Left cardiac atrium (tissue), 4 donors: ENCODE measurements at regions of chr6 and their contacts with region 1.

Region 1: DNA sequence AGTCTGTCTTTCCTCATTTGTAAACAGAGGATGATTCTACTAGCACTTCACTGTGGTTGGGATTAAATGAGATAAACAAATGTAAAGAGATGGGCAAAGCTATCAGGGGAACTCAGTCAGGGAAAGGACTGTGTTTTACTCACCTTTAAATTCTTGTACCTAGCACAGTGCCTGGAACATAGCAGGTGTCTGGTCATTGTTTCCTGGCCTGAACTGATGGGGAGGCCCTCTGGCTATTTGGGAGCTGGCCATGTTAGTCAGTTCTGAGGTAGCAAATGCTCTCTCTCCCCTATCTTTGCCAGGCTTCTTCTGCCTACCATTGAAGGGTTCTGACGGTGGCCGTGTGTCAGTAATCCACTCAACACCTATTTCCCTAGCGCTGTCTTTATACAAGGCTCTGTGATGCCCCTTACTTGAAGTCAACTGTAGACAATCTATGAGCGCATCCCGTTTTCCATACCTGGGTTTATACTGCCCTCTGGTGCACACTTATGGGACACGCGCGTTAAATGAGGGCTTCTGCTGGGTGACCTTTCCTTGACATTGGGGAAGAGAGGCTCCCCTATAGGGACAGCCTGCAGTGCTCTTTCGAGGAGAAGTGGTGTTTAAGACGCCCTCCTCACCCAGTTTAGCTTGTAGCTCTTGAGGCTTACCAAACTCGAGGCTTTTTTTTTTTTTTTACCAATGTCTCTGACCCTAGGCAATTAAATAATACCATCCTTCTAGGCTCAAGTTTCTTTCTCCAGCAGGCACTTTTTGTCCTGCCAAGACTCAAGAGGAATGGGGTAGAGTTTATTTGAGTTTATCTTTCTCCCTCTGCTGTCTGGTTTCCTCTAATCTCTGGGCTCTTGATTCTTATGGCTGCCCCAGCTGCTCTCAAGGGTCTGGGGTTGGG is 4.0 kb upstream of the SPATS1 start:
- DNase-seq: peak; percentile 38
- ATAC-seq: peak; percentile 61 to 77

Region 2: GRCh38 chr6:44151348-44152108 is 186.9 kb before region 1 on chr6:
- intact Hi-C with region 1: loop called in 1 of 2 experiments (anchors 10 kb)
- DNase-seq: peak; percentile 77
- ATAC-seq: peak; percentile 73 to 74

Region 3: DNA sequence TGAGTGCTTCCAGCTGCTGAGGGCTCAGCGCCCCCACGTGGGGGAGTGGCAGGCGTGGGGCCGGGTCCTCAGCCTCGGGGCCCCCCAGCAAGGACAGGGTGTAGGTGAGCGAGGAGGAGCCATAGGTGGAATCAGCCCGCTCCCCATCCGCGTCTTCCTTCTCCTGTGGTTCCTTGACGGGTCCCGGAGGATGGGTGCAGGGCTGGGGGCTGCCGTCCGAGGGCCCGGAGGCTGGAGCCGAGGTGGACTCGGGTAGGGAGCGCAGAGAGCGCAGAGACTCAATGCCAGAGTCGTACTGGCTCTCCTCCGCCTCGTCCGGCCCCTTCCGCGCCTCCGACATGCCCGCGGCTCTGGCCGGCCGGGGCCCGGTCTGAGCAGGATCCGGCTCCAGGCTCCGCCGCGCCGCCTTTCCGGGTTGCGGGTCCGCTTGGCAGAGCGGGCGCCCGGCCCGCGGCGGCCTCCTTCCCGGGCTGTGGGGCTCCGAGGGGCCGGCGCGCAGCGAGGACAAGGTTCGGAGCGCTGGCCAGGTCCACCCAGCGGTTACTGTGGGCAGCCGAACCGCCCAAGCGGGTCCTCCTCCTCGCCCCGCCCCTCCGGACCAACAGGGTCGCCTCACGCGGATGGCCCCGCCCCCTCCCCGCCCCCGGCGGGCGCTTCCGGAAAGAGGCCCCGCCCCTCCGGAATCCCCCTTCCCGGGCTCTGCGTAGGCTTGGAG is 73.3 kb before region 1 on chr6 and contains the start of gene NFKBIE:
- intact Hi-C with region 1: loop called (anchors 2 kb)
- DNase-seq: peak; percentile 98
- ATAC-seq: peak; percentile 94 to 95
- total RNA-seq, gene NFKBIE: 3.8 to 5.8 TPM

Region 4: DNA sequence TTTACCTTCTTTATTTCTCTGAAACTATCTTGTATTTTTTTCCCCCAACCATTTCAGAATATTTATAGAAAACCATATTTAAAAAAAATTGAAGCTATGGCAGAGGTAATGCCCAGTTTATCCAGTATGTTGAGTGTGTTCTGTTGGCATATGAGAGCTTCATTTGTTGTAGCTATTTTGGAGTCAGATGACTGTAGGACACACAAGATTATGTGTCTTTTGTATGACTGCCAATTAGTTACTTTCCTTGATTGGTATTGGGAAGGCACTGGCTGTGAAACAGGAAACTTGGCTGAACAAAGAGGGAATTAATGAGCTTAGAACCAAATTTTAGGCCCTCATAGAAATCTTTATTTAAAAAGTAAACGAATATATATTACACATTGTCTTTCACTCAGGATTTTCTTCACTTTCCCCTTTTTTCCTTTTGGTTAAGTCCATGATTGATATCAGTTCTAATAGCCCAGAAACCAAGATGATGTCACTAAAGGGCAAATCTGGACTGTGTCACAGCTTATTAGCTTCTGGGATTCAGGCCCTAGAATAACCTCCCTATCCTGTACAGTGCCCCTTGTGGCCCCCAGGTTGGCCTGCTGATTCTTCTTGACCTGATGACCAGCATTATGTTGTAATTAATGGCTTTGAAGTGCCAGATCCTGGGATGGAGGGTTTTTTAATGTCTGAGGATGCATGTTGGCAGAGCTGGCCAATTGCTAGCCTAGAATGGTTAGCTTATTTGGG is 59.1 kb after region 1 on chr6:
- intact Hi-C with region 1: no loop called
- DNase-seq: no peak
- ATAC-seq: peak; percentile 51 to 56